ENCODE measurements at regions of chr14 and their contacts with region 1.

Region 1: GRCh38 chr14:31070431-31070830 is 44.3 kb upstream of the STRN3 start:
- DNase-seq: no peak
- H3K4me3 ChIP-seq: no peak overlapping the region
- H3K27ac ChIP-seq: no peak overlapping the region
- H3K4me1 ChIP-seq: no peaks in the 10 kb centered on the region
- H3K27me3 ChIP-seq: no peaks in the 10 kb centered on the region
- CTCF ChIP-seq: no peak

Region 2: DNA sequence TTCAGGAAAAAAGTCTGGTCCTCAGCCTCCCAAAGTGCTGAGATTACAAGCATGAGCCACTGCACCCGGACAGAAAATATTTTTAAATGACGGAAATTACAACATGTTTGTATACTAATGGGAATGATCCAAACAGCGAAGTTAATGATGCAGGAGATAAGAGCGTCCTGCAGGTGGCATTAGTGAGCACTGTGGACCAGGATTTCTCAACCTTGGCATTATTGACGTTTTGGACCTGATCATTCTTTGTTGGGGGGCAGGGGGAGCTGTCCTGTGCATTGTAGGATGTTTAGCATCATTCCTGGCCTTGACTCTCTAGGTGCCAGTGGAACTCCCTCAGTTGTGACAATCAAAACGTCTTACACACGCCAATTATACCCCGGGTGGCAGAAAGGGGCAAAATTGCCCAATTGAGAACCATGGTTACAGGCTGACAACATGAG is 414.2 kb before region 1 on chr14:
- CTCF ChIA-PET with region 1: no interaction called
- POLR2A ChIA-PET with region 1: no interaction called
- intact Hi-C with region 1: no loop called
- DNase-seq: peak; percentile 52
- H3K4me3 ChIP-seq: no peak overlapping the region
- H3K27ac ChIP-seq: no peak overlapping the region
- H3K4me1 ChIP-seq: no peaks in the 10 kb centered on the region
- H3K27me3 ChIP-seq: no peaks in the 10 kb centered on the region
- CTCF ChIP-seq: peak; percentile 83

Region 3: GRCh38 chr14:31057701-31058364 is 12.6 kb before region 1 on chr14:
- CTCF ChIA-PET with region 1: no interaction called
- POLR2A ChIA-PET with region 1: interaction called, 16 read pairs
- intact Hi-C with region 1: no loop called
- DNase-seq: no peak
- H3K4me3 ChIP-seq: no peak overlapping the region
- H3K27ac ChIP-seq: no peak overlapping the region
- H3K4me1 ChIP-seq: peaks cover 5% of the 10 kb centered on the region
- H3K27me3 ChIP-seq: no peaks in the 10 kb centered on the region
- CTCF ChIP-seq: no peak